ENCODE measurements at regions of chr10 and their contacts with region 1.

Region 1: GRCh38 chr10:119416855-119417254 is 125.7 kb downstream of the RGS10 start:
- DNase-seq: peak; percentile 36 to 81 (median 60)

Region 2: DNA sequence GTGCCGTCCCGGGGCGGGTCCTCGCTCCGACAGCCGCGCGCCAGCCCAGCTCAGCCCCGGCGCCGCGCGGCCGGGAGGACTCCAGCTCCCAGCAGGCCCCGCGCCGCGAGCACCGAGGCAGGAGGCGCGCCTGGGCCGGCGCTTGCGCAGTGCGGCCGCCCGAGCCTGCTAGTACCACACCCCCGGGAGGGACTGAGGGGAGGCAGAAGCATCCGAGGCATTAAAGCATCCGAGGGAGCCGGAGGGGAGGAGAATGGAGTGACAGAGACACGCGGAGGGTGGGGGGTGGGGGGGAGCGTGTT is 209.5 kb before region 1 on chr10 and contains the start of gene GRK5:
- intact Hi-C with region 1: loop called (anchors 10 kb)
- DNase-seq: peak; percentile 86 to 98 (median 95)

Region 3: GRCh38 chr10:119348516-119349240 is 68.2 kb before region 1 on chr10:
- intact Hi-C with region 1: no loop called
- DNase-seq: no peak

Region 4: GRCh38 chr10:119542988-119543813 is 126.3 kb after region 1 on chr10:
- intact Hi-C with region 1: no loop called
- DNase-seq: peak in 30 of 42 donors; percentile 19 to 63 (median 31)

Region 5: GRCh38 chr10:119555178-119555784 is 138.4 kb after region 1 on chr10:
- intact Hi-C with region 1: no loop called
- DNase-seq: no peak